Heart right ventricle (tissue), 16 donors: ENCODE measurements at regions of chr3 and their contacts with region 1.

Region 1: DNA sequence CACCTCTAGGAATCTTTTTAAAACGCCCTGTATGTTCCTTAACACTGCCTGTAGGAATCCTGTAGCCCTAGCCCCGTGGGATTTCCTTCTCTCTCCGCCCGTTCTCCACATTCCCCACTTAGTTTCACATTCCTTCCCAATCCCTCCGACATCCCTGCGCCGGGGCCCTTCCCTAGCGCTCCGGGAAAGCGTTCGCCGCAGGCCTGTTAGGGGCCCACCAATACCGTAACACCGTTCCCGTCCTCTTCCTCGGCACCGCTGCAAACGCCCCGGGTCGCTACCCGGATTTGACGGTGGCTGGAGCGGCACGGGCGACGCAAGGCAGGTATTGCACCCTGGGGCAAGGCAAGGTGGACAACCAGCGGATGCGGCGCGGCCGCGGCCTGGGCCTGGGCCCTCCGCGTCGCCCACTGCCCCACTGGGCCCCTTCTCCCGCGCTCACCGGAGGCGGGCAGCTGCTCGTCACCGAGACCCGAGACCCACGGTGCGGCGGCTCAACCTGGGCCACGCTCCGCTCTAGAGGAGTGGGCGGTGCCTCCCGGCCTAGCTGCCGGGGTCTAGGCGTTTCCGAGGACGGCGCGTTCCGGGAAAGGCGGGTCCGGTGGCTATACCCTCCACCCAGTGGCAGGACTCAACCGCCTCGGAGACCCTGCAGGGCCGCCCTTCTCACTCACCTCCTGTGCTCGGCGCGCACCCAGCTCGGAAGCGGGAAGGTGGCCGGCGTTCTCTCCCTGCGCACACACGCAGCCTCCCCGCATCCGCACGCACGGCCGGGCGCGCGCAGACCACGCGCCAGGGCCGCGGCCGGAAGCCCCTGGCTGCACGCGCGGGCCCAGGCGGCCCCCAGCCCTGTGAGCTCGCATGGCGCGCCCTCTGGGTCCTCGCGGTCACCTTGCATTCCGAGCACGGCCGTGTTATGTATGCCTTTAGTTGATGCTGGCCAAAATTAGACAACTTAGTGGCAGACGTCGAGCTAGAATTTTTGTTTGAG is at the start of gene B3GALNT1:
- DNase-seq: peak; percentile 47 to 67
- ATAC-seq: peak; percentile 48 to 87 (median 72)
- H3K4me3 ChIP-seq: peak within 1 kb of the TSS; percentile 40 to 88 (median 80)
- H3K27ac ChIP-seq: peak within 1 kb of the TSS; percentile 81 to 95 (median 90)
- H3K4me1 ChIP-seq: peaks cover 0 to 45% (median 22%) of the 10 kb centered on the region in 9 donors
- H3K27me3 ChIP-seq: no peaks in the 10 kb centered on the region
- CTCF ChIP-seq: peak in 1 of 9 donors; percentile 17
- total RNA-seq, gene B3GALNT1: 45.7 to 85.1 (median 76.4) TPM

Region 2: GRCh38 chr3:160754855-160755747 is 349.8 kb before region 1 on chr3:
- intact Hi-C with region 1: no loop called
- DNase-seq: peak; percentile 93 to 95
- ATAC-seq: peak; percentile 92 to 98 (median 95)
- H3K4me3 ChIP-seq: peak overlapping the region; percentile 85 to 97 (median 90)
- H3K27ac ChIP-seq: peak overlapping the region; percentile 87 to 97 (median 94)
- H3K4me1 ChIP-seq: peaks cover 0 to 44% (median 35%) of the 10 kb centered on the region in 9 donors
- H3K27me3 ChIP-seq: no peaks in the 10 kb centered on the region
- CTCF ChIP-seq: peak in 1 of 9 donors; percentile 13

Region 3: DNA sequence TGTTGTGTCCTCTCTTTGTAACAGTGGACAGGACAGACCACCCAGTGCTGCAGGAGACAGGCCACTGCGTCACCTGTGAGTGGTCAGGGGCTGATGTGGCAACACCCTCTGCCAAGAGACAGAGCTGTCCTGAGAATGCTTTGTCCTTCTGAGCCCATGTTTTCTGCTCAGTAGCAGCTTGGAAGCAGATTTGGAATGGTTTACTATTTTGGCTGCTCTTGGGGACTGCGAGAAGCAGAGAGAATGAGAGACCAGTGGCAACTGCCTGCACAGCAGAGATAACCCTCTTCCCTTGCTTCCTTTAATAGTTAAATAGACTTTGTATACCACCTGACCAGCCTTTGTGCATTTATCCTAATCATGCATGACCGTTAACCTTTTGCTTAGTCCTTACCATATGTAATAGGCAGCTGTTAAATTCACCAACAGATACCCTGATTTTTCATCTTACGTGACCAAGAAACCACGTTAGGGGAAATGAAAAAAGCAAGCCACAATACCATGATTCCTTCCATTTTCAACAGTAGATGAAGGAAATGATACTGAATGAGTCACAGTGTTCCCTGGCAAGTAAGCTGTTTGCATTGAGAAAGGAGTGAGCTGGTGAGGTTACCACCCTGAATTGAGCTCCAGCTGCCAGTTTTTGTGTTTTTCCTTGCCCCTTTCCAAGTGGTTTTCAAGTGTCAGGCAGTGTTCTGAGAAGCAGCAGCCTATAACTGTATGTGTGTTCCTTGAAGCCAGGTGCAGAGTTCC is 35.2 kb before region 1 on chr3:
- intact Hi-C with region 1: no loop called
- DNase-seq: no peak
- ATAC-seq: peak in 7 of 8 donors; percentile 7 to 54 (median 46)
- H3K4me3 ChIP-seq: no peak overlapping the region
- H3K27ac ChIP-seq: peak overlapping the region in 5 of 10 donors; percentile 18 to 64 (median 34)
- H3K4me1 ChIP-seq: peaks cover 4 to 39% (median 19%) of the 10 kb centered on the region in 9 donors
- H3K27me3 ChIP-seq: no peaks in the 10 kb centered on the region
- CTCF ChIP-seq: no peak

Region 4: DNA sequence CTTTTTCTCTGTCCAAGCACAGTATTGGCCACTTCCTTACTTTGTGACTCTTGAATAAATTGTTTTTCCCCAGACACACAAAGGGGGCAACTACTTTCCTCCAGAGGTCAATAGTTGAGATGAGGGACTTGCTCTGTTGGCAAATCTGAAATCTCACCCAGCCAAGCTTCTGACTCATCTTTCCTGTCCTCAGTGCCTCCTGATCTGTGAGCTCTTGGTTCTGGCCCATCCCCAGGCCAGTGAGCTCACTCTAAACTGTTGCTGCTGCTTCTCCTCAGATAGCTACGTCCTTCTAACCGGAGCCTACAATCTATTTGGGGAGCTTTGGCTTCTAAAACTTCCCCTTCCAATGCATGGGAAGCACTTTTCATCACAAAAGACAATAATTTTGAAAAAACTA is 66.3 kb after region 1 on chr3:
- intact Hi-C with region 1: loop called in 1 of 10 experiments (anchors 10 kb)
- DNase-seq: peak; percentile 49 to 72
- ATAC-seq: peak; percentile 87 to 100 (median 94)
- H3K4me3 ChIP-seq: no peak overlapping the region
- H3K27ac ChIP-seq: peak overlapping the region in 8 of 10 donors; percentile 5 to 60 (median 52)
- H3K4me1 ChIP-seq: peaks cover 0 to 20% (median 11%) of the 10 kb centered on the region in 9 donors
- H3K27me3 ChIP-seq: no peaks in the 10 kb centered on the region
- CTCF ChIP-seq: no peak

Region 5: DNA sequence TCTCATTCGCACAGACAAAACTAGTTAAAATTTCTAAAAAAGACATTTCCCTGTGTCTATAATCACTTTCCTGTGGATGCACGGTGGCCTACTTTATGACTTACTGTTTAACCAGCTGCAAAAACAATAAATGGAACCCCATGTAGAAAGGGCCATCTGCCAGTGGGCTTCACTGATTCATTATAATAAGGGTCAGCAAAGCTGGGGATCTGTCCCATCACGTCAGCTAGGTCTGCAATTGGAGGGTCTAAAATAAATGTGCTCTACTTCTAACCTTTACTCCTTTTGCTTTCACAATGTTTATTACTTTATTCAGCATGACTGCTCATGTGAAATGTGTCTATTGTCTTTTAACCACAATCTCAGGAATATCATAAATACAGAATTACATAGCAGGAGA is 73.1 kb after region 1 on chr3:
- intact Hi-C with region 1: loop called in 2 of 10 experiments (anchors 5 to 10 kb)
- DNase-seq: no peak
- ATAC-seq: no peak
- H3K4me3 ChIP-seq: no peak overlapping the region
- H3K27ac ChIP-seq: no peak overlapping the region
- H3K4me1 ChIP-seq: peaks cover 0 to 20% (median 8%) of the 10 kb centered on the region in 9 donors
- H3K27me3 ChIP-seq: no peaks in the 10 kb centered on the region
- CTCF ChIP-seq: no peak

Region 6: DNA sequence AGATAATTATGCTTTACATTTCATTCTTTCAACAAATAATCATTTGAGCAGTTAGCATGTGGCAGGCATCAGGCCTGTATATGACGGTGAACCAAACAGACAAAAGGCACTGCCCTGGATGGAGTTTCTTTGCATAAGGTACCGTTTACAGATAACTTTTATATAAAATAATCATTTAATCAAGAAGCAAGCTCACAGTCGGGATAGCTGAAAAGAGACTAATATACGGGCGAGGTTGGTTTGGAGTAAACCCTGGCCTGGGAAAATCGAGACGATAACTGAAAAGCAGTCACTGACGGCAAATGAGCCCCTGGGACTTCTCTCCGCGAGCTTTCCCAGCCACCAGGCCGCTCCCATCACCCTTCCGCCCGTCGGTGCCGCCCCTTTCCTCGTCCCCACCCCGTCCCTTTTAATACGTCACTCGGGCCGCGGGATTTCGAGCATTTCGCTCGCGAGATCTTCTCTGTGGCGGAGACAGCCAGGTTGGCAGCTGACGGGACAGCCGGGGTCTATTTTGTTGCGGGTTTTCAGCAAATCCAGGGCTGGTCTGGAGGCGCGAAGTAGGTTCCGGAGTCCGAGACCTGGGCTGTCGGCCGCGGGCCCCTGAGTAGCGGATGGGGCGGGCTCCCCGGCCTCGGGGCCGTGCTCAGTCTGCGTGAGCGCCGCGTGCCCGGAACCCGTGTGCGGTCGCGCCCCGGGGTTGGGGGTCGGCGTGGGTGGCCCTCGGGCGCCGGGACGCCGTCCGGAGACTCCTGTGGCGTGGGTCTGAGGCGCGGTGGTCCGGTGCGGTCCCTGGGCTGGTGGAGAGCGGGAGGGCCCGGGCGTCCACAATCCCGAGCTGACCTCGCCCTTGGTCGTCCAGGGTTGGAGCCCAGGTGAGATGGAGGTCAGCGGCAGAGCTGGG is 116.2 kb after region 1 on chr3 and contains the start of gene NMD3:
- intact Hi-C with region 1: loop called in 5 of 10 experiments (anchors 5 to 10 kb)
- DNase-seq: peak; percentile 97 to 98
- ATAC-seq: peak; percentile 97 to 98 (median 97)
- H3K4me3 ChIP-seq: peak within 1 kb of the TSS; percentile 84 to 99 (median 93)
- H3K27ac ChIP-seq: peak within 1 kb of the TSS; percentile 87 to 99 (median 97)
- H3K4me1 ChIP-seq: peaks cover 0 to 54% (median 47%) of the 10 kb centered on the region in 9 donors
- H3K27me3 ChIP-seq: no peaks in the 10 kb centered on the region
- CTCF ChIP-seq: no peak
- total RNA-seq, gene NMD3: 50.9 to 76.9 (median 61.9) TPM

Region 7: DNA sequence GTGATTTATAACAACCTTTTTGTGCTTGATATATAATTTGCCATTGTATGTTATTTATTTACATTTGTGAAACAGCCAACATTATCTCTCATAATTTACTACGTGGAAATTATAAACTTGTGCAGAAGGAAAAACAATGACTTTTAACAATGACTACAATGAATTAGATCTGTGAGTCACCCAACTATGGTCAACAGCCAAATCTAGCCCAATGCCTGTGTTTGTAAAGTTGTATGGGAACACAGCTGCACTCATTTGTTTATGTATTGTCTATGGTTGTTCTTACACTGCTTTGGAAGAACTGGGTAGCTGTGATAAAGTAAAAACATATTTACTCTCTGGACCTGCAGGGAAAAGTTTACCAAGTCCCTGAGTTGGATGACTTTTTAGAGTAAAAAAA is 502.2 kb after region 1 on chr3:
- intact Hi-C with region 1: no loop called
- DNase-seq: no peak
- ATAC-seq: no peak
- H3K4me3 ChIP-seq: no peak overlapping the region
- H3K27ac ChIP-seq: no peak overlapping the region
- H3K4me1 ChIP-seq: no peaks in the 10 kb centered on the region
- H3K27me3 ChIP-seq: no peaks in the 10 kb centered on the region
- CTCF ChIP-seq: no peak